H1 (cell line): ENCODE measurements at regions of chr3 and their contacts with region 1.

Region 1: DNA sequence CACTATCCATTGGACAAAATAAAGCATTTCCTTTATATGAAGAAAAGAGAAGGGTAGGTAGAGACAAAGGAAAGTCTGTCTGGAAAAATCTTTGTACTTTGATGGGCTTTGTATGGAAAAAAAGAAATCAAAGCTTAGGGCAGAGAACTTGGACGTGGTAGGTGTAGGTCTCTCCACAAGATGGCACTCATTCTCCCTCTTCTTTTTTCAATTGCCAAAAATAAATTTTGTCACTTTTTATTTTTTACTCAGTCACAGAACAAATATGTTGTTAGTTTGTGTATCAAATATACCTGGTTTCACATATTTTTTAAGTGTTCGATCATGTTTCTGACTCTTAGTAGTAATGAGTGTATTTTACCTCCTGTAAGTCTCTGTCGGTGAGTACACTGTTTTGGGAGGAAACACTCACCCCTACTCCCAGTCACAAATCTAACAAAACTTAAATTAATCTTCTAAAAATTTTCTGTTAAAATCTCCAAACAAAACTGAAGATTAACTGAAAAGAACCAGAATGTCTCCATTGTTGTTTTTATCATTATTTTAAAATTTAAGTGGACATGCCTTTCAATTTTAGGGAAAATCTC is 415.8 kb upstream of the GOLIM4 start:
- DNase-seq: no peak
- H3K4me3 ChIP-seq: no peak overlapping the region
- H3K27ac ChIP-seq: no peak overlapping the region
- H3K4me1 ChIP-seq: peaks cover 2 to 7% (median 5%) of the 10 kb centered on the region in 4 experiments; a peak in 2 of 7 replicates
- H3K27me3 ChIP-seq: no peaks in the 10 kb centered on the region
- CTCF ChIP-seq: peak in 2 of 3 experiments; percentile 47 to 58; a peak in 2 of 4 replicates
- EP300 ChIP-seq: no peak
- POLR2A ChIP-seq: no peak
- RAD21 ChIP-seq: peak; percentile 70 to 72

Region 2: GRCh38 chr3:168457962-168458539 is 53.5 kb before region 1 on chr3:
- CTCF ChIA-PET with region 1: no interaction called
- POLR2A ChIA-PET with region 1: no interaction called
- DNase-seq: no peak
- H3K4me3 ChIP-seq: no peak overlapping the region
- H3K27ac ChIP-seq: no peak overlapping the region
- H3K4me1 ChIP-seq: no peaks in the 10 kb centered on the region
- H3K27me3 ChIP-seq: no peaks in the 10 kb centered on the region
- CTCF ChIP-seq: no peak
- EP300 ChIP-seq: no peak
- POLR2A ChIP-seq: no peak
- RAD21 ChIP-seq: no peak

Region 3: GRCh38 chr3:168497741-168498140 is 13.8 kb before region 1 on chr3:
- CTCF ChIA-PET with region 1: interaction called, 10 read pairs
- POLR2A ChIA-PET with region 1: no interaction called
- DNase-seq: no peak
- H3K4me3 ChIP-seq: no peak overlapping the region
- H3K27ac ChIP-seq: no peak overlapping the region
- H3K4me1 ChIP-seq: no peaks in the 10 kb centered on the region
- H3K27me3 ChIP-seq: no peaks in the 10 kb centered on the region
- CTCF ChIP-seq: no peak
- EP300 ChIP-seq: no peak
- POLR2A ChIP-seq: no peak
- RAD21 ChIP-seq: no peak